Panc1 (cell line): ENCODE measurements at regions of chr19 and their contacts with region 1.

Region 1: DNA sequence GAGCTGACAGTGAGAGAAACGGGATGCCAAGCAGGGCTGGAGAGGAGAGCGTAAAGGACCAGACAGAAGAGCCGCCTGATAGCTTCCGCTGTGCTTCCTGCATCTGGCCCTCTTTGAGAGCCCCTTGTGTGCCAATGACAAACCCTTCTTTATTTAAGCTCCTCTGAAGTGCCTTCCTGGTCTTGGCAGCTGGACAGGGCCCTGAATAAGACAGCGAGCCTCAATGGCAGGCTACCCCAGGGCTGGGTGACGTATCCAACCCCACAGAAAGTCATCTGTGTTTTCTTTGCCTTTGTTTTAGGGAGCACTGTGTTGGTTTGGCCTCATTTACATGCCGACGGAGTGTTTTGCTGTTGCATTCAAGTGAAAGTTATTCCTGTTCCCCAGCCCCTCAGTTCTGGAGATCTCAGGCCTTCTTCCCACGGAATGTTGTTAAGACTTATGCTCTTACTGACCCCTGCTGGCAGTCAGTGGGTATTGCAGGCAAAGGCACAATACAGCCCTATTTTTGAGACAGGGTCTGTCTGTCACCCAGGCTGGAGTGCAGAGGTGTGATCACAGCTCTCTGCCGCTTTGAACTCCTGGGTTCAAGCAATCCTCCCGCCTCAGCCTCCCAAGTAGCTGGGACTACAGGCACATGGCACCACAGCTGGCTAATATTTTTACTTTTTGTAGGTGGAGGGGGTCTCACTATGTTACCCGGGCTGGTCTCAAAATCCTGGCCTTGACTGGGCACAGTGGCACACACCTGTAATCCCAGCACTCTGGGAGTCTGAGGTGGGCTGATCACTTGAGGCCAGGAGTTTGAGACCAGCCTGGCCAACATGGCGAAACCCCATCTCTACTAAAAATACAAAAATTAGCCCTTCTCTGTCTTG is 16.8 kb downstream of the CCL25 start:
- DNase-seq: no peak
- ATAC-seq: no peak
- H3K4me3 ChIP-seq: no peak overlapping the region
- H3K27ac ChIP-seq: no peak overlapping the region
- H3K4me1 ChIP-seq: no peaks in the 10 kb centered on the region
- H3K27me3 ChIP-seq: no peaks in the 10 kb centered on the region
- CTCF ChIP-seq: peak; percentile 85

Region 2: DNA sequence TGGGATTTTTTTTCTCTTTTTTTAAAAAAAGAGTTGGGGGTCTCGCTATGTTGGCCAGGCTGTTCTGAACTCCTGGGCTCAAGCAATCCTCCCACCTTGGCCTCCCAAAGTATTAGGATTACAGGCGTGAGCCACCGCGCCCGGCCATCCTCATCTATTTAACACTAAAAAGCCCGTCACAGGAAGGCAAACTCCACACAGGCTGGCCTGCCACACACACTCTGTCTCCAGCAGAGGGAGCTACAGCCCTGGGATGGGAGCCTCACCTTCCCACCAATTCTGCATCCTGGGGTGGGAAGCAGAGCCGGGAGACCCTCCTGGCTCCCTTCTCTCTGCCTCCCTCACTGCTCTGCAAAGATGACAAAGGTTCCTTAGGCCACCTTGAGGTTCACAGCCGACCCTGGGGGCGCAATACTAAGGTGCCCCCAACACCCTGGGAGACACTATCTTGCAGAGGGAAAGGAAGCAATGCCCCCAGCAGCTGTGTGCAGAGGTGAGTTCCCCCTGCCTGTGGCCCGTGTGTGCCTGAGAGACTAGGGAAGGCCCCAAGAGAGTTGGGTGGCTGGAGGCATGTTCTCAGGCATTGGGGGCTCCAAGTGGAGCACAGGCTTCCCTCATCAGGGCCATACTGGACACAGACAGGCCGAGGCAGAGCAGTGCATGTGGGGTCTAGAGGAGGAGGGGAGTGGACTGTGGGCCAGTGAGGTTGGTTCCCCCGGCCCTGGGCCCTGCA is 98.5 kb before region 1 on chr19:
- CTCF ChIA-PET with region 1: no interaction called
- POLR2A ChIA-PET with region 1: no interaction called
- in situ Hi-C with region 1: no loop called
- intact Hi-C with region 1: no loop called
- DNase-seq: no peak
- ATAC-seq: peak; percentile 81
- H3K4me3 ChIP-seq: no peak overlapping the region
- H3K27ac ChIP-seq: no peak overlapping the region
- H3K4me1 ChIP-seq: no peaks in the 10 kb centered on the region
- H3K27me3 ChIP-seq: no peaks in the 10 kb centered on the region
- CTCF ChIP-seq: peak; percentile 89

Region 3: GRCh38 chr19:8050274-8051096 is 18.9 kb before region 1 on chr19:
- CTCF ChIA-PET with region 1: interaction called, 10 read pairs
- POLR2A ChIA-PET with region 1: no interaction called
- in situ Hi-C with region 1: no loop called
- intact Hi-C with region 1: no loop called
- DNase-seq: peak; percentile 43
- ATAC-seq: peak; percentile 94
- H3K4me3 ChIP-seq: peak overlapping the region; percentile 33 to 50
- H3K27ac ChIP-seq: no peak overlapping the region
- H3K4me1 ChIP-seq: no peaks in the 10 kb centered on the region
- H3K27me3 ChIP-seq: no peaks in the 10 kb centered on the region
- CTCF ChIP-seq: no peak